ENCODE measurements at regions of chr4 and their contacts with region 1.

Region 1: DNA sequence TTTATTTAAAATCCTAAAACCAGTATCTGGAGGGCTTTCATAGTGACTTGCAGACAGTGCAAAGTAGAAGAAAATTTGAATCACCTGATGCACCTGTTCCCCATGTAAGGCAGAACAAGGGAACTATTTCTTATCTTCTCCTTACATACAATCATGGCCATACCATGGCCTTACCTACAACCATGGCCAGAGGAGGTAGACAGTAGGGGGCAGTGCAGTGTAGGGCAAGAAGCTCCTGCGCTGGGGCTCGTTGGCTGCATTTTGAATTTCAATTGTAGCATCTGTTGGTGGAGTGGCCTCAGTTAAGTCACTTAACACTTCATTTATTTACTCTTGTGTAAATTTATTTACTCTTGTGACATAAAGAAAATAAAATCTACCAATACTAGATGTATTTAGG is 33.0 kb downstream of the GALNTL6 start:
- DNase-seq: peak; percentile 43
- ATAC-seq: no peak
- H3K4me3 Mint-ChIP-seq: no peak overlapping the region
- H3K27ac Mint-ChIP-seq: no peak overlapping the region
- H3K4me1 Mint-ChIP-seq: no peaks in the 10 kb centered on the region
- H3K27me3 Mint-ChIP-seq: no peaks in the 10 kb centered on the region

Region 2: DNA sequence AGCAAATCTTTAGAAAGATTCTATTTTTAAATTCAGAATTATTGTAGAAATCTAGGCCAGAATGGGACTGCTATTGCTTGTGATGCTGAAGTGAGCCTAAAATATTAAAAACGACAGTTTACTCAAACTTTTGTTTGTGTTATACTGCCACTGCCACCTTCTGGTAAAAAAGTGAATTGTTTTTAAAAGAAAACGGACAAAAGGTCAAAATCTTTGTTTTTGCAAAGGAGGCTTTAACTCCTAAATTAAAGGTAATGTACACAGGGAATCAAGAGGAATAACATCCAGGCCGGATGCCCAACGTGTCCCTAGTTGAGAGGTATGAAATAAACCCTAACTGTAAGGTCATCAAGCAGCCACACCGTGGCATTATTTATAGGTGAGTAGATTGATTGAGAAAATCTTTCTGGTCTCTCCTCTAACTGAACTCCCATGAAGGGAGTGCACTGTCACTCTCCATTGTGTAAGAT is 984.1 kb after region 1 on chr4:
- CTCF ChIA-PET with region 1: no interaction called
- POLR2A ChIA-PET with region 1: no interaction called
- intact Hi-C with region 1: loop called in 1 of 2 experiments (anchors 2 kb)
- DNase-seq: no peak
- ATAC-seq: no peak
- H3K4me3 Mint-ChIP-seq: no peak overlapping the region
- H3K27ac Mint-ChIP-seq: no peak overlapping the region
- H3K4me1 Mint-ChIP-seq: no peaks in the 10 kb centered on the region
- H3K27me3 Mint-ChIP-seq: peaks cover 5% of the 10 kb centered on the region

Measured in activated CD4-positive, alpha-beta T cell treated with anti-CD3 and anti-CD28 coated beads for 36 hours (primary cell).